ENCODE measurements at regions of chr1 and their contacts with region 1.

Region 1: DNA sequence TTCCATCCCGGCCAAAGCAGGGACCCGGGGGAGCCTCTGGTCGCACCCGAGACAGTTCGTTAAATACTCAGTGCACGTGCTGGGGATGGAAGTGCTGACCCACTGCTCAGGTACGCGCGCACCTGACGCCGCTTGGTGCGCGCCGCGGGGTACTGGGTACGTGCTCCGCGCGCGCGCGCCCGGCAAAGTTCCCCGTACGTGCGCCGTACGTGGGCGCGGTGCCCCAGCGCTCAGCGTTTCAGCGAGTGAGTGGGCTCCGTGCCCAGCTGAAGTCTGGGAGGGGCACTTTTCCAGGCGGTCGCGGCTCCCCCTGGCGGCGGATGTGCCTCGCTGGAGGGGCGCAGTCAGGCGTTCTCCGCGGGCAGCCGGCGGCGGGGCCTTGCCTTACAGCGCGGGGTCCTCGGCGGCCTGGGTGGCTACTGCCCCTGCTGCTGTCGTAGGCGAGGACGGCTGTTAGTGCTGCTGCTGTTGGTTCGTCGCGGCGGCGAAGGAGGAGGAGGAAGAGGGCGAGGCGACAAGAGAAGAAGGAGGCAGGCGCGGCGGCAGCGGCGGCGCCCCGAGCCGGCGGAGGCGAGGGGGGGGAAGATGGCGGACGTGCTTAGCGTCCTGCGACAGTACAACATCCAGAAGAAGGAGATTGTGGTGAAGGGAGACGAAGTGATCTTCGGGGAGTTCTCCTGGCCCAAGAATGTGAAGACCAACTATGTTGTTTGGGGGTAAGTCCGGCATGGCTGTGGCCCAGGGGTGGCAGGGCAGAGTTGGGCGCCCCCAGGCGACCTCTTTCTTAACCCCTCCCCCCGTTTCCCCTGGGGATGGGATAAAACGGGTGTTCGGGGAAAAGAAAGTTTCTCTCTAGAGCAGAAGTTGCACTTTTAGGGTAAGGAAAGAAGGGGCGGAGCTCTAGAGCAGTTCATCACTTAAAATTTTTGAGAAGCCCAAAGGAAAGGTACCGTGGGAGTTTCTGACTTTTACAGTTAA is at the start of gene CDC73:
- DNase-seq: peak; percentile 92 to 97 (median 96)
- H3K4me3 ChIP-seq: peak within 1 kb of the TSS; percentile 59 to 95 (median 84)
- H3K27ac ChIP-seq: peak within 1 kb of the TSS; percentile 68 to 98 (median 94)
- H3K27me3 ChIP-seq: no peaks in the 10 kb centered on the region
- CTCF ChIP-seq: peak; percentile 75 to 99 (median 90)
- total RNA-seq, gene CDC73: 43.4 to 70.8 (median 56.4) TPM

Region 2: DNA sequence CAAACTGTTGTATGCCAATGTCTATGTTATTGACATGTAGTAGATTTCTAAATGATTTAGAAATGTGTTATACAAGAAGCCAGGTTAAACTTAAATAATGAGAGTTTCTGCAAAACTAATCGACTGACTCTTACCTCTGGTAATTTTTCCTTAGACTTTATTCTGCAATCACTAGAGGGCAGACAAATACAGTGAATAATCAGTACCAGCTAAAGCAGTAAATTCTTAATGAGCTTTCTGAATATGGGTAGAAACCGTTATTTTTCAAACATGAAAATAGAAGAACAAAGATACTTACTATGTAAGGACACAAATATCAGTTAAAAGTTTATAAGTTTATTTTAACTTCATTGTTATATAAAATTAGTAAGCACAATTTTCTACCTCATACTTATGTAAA is 644.3 kb before region 1 on chr1:
- intact Hi-C with region 1: loop called in 1 of 2 experiments (anchors 10 kb)
- DNase-seq: no peak
- H3K4me3 ChIP-seq: no peak overlapping the region
- H3K27ac ChIP-seq: no peak overlapping the region
- H3K27me3 ChIP-seq: peaks cover 0 to 6% (median 0%) of the 10 kb centered on the region in 45 donors
- CTCF ChIP-seq: peak in 55 of 56 donors; percentile 38 to 86 (median 63)

Region 3: DNA sequence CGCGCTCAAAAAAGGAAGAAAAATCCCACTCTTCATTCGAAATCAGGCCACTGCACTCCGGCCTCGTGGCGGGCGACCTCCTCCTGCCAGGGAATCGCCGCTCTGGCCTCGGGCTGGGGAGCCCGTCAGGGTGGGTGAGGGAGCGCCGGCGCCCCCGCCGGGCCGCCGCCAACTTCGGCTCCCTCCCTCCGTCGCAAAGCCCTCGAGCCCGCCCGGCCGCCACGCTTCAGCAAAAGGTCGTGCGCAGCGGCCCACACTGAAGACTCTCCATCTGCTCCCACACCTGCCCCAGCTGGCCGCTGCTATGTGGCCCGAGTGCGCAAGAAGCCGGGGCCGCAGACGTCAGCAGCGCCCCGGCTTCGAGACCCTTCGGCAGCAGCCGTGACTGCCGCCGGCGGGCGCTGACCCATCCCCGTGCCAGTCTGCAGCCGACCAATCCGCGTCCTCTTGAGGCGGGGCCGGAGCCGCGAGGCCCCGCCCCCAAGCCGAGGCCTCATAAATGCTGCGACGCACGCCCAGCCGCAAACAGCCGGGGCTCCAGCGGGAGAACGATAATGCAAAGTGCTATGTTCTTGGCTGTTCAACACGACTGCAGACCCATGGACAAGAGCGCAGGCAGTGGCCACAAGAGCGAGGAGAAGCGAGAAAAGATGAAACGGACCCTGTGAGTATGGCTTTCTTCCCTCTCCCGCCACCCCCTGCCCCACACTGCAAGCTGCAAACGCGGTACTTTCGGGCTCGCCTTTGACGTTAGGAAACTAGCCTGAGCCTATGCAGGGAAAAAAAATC is 313.2 kb before region 1 on chr1 and contains the start of gene RGS2:
- intact Hi-C with region 1: loop called (anchors 2 to 5 kb)
- DNase-seq: peak; percentile 87 to 97 (median 95)
- H3K4me3 ChIP-seq: peak within 1 kb of the TSS; percentile 64 to 96 (median 81)
- H3K27ac ChIP-seq: peak within 1 kb of the TSS; percentile 72 to 98 (median 92)
- H3K27me3 ChIP-seq: no peaks in the 10 kb centered on the region
- CTCF ChIP-seq: peak in 43 of 56 donors; percentile 7 to 70 (median 45)
- total RNA-seq, gene RGS2: 11.3 to 144 (median 30.8) TPM

Region 4: DNA sequence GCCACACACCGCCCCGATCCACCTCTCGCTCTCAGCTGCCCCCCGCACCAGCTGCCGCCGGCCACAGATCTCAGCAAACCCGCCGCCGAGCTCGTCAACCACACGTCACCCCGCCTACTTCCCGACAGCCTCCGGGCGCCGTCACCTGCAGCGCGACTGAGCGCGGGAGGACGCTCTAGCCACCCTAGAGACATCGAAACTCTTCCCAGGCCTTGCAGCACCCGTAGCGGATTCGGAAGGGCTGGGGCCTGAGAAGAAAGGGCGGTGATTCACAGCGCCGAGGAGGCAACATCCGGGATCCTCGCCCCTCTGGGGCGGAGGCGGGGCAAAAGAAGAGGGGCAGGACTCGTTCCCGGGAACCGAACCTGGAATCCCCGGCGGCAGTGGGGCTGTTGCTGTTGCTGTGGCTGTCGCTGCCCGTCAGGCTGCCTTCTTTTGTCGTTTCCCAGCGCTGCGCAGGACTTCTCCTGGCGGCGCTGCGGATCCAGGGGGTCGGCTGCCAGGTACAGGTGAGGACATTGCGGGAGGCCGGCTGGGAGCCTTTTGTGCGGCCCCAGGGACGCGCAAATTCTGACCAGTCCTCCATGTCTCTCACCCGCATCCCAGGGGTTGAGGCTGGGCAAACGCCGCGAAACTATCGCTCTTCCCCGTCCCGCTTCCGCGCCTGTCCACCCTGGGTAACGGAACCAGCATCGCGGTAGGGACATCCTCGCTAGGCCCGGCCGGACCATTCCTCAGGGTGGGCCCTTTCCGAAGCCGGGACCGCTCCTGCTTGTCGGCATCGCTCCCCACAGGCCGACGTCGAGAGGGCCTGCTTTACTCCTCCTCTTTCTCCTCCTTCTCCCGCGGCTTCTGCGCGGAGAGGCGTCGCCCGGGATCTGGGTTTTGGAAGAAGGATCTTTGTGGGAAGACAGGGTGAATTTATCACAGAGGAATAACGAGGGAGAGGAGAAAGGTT is 62.4 kb before region 1 on chr1 and contains the starts of genes RO60 and UCHL5:
- intact Hi-C with region 1: loop called (anchors 1 to 2 kb)
- DNase-seq: peak; percentile 89 to 98 (median 96)
- H3K4me3 ChIP-seq: peak within 1 kb of the TSS; percentile 55 to 97 (median 88)
- H3K27ac ChIP-seq: peak within 1 kb of the TSS; percentile 65 to 99 (median 95)
- H3K27me3 ChIP-seq: no peaks in the 10 kb centered on the region
- CTCF ChIP-seq: peak in 47 of 56 donors; percentile 14 to 71 (median 43)
- total RNA-seq, gene RO60: 58.5 to 126 (median 77.6) TPM
- total RNA-seq, gene UCHL5: 23.2 to 70.9 (median 51.2) TPM

Region 5: GRCh38 chr1:193104906-193105820 is 16.7 kb before region 1 on chr1 and contains the start of gene GLRX2:
- intact Hi-C with region 1: loop called (anchors 1 kb)
- DNase-seq: peak; percentile 73 to 91 (median 82)
- H3K4me3 ChIP-seq: peak within 1 kb of the TSS; percentile 67 to 99 (median 86)
- H3K27ac ChIP-seq: peak within 1 kb of the TSS; percentile 60 to 98 (median 94)
- H3K27me3 ChIP-seq: no peaks in the 10 kb centered on the region
- CTCF ChIP-seq: peak in 37 of 56 donors; percentile 14 to 67 (median 37)
- total RNA-seq, gene GLRX2: 14.2 to 51.8 (median 35.5) TPM

Region 6: GRCh38 chr1:193185901-193186731 is 64.2 kb after region 1 on chr1 and contains the start of gene B3GALT2:
- intact Hi-C with region 1: loop called in 1 of 2 experiments (anchors 5 kb)
- DNase-seq: peak in 8 of 10 donors; percentile 19 to 85 (median 53)
- H3K4me3 ChIP-seq: peak within 1 kb of the TSS; percentile 38 to 79 (median 63)
- H3K27ac ChIP-seq: peak within 1 kb of the TSS; percentile 71 to 98 (median 92)
- H3K27me3 ChIP-seq: no peaks in the 10 kb centered on the region
- CTCF ChIP-seq: peak in 6 of 56 donors; percentile 7 to 26 (median 17)
- total RNA-seq, gene B3GALT2: 7.6 to 55.7 (median 31.2) TPM

Measured in dorsolateral prefrontal cortex (tissue), 120 donors.